K562 (cell line): ENCODE measurements at regions of chr2 and their contacts with region 1.

Region 1: GRCh38 chr2:172931918-172932520 is 143.6 kb upstream of the MAP3K20 start:
- DNase-seq: peak; percentile 40 to 79 (median 44)
- ATAC-seq: peak; percentile 88
- H3K4me3 ChIP-seq: no peak overlapping the region
- H3K27ac ChIP-seq: no peak overlapping the region
- H3K4me1 ChIP-seq: peaks cover 0 to 8% of the 10 kb centered on the region in 2 experiments; a peak in 3 of 5 replicates
- H3K27me3 ChIP-seq: peaks cover 0 to 3% of the 10 kb centered on the region in 2 experiments; a peak in 1 of 5 replicates
- CTCF ChIP-seq: peak; percentile 68 to 86 (median 72); a peak in 5 of 6 replicates
- EP300 ChIP-seq: no peak
- POLR2A ChIP-seq: no peak
- RAD21 ChIP-seq: peak in 1 of 2 experiments; percentile 76; a peak in 3 of 4 replicates

Region 2: GRCh38 chr2:172710584-172711024 is 221.4 kb before region 1 on chr2:
- CTCF ChIA-PET with region 1: no interaction called
- POLR2A ChIA-PET with region 1: no interaction called
- in situ Hi-C with region 1: no loop called
- intact Hi-C with region 1: loop called (anchors 5 kb)
- DNase-seq: peak in 3 of 4 experiments; percentile 14 to 37 (median 34)
- ATAC-seq: peak; percentile 67; the same call in 2 of the 3 replicates
- H3K4me3 ChIP-seq: no peak overlapping the region
- H3K27ac ChIP-seq: no peak overlapping the region
- H3K4me1 ChIP-seq: peaks cover 0 to 3% of the 10 kb centered on the region in 2 experiments; a peak in 1 of 5 replicates
- H3K27me3 ChIP-seq: peaks cover 0 to 26% of the 10 kb centered on the region in 2 experiments; a peak in 2 of 5 replicates
- CTCF ChIP-seq: peak; percentile 56 to 74 (median 62)
- EP300 ChIP-seq: no peak
- POLR2A ChIP-seq: no peak
- RAD21 ChIP-seq: peak; percentile 48 to 69

Region 3: GRCh38 chr2:172806493-172806892 is 125.5 kb before region 1 on chr2:
- CTCF ChIA-PET with region 1: interaction called, 15 read pairs
- POLR2A ChIA-PET with region 1: no interaction called
- in situ Hi-C with region 1: loop called (anchors 5 kb)
- intact Hi-C with region 1: loop called (anchors 2 kb)
- DNase-seq: peak; percentile 17 to 38 (median 26)
- ATAC-seq: peak; percentile 51
- H3K4me3 ChIP-seq: no peak overlapping the region
- H3K27ac ChIP-seq: no peak overlapping the region
- H3K4me1 ChIP-seq: no peaks in the 10 kb centered on the region
- H3K27me3 ChIP-seq: no peaks in the 10 kb centered on the region
- CTCF ChIP-seq: peak; percentile 66 to 88 (median 80)
- EP300 ChIP-seq: no peak
- POLR2A ChIP-seq: no peak
- RAD21 ChIP-seq: peak; percentile 82 to 92

Region 4: GRCh38 chr2:172813314-172813888 is 118.6 kb before region 1 on chr2:
- CTCF ChIA-PET with region 1: interaction called, 11 read pairs
- POLR2A ChIA-PET with region 1: interaction called, 4 read pairs
- in situ Hi-C with region 1: loop called (anchors 5 kb)
- intact Hi-C with region 1: no loop called
- DNase-seq: peak in 1 of 4 experiments; percentile 6
- ATAC-seq: peak; percentile 51; the same call in 1 of the 3 replicates
- H3K4me3 ChIP-seq: no peak overlapping the region
- H3K27ac ChIP-seq: no peak overlapping the region
- H3K4me1 ChIP-seq: no peaks in the 10 kb centered on the region
- H3K27me3 ChIP-seq: 0 out of 5 replicates have a peak, but pooled peaks cover 0 to 3% of the 10 kb centered on the region in 2 experiments
- CTCF ChIP-seq: peak in 2 of 3 experiments; percentile 26 to 47; a peak in 2 of 6 replicates
- EP300 ChIP-seq: no peak
- POLR2A ChIP-seq: no peak
- RAD21 ChIP-seq: peak in 1 of 2 experiments; percentile 40; a peak in 1 of 4 replicates

Region 5: GRCh38 chr2:172864182-172864581 is 67.8 kb before region 1 on chr2:
- CTCF ChIA-PET with region 1: interaction called, 19 read pairs
- POLR2A ChIA-PET with region 1: no interaction called
- in situ Hi-C with region 1: no loop called
- intact Hi-C with region 1: loop called (anchors 1 kb)
- DNase-seq: peak; percentile 42 to 66 (median 56)
- ATAC-seq: peak; percentile 95
- H3K4me3 ChIP-seq: no peak overlapping the region
- H3K27ac ChIP-seq: no peak overlapping the region
- H3K4me1 ChIP-seq: no peaks in the 10 kb centered on the region
- H3K27me3 ChIP-seq: no peaks in the 10 kb centered on the region; a peak in 2 of 5 replicates
- CTCF ChIP-seq: peak; percentile 76 to 87 (median 86)
- EP300 ChIP-seq: no peak
- POLR2A ChIP-seq: no peak
- RAD21 ChIP-seq: peak; percentile 78 to 92

Region 6: GRCh38 chr2:172888714-172889669 is 43.0 kb before region 1 on chr2:
- CTCF ChIA-PET with region 1: no interaction called
- POLR2A ChIA-PET with region 1: no interaction called
- in situ Hi-C with region 1: no loop called
- intact Hi-C with region 1: loop called (anchors 1 kb)
- DNase-seq: no peak
- ATAC-seq: no peak
- H3K4me3 ChIP-seq: no peak overlapping the region
- H3K27ac ChIP-seq: no peak overlapping the region
- H3K4me1 ChIP-seq: no peaks in the 10 kb centered on the region
- H3K27me3 ChIP-seq: peaks cover 6 to 9% of the 10 kb centered on the region in 2 experiments; a peak in 4 of 5 replicates
- CTCF ChIP-seq: no peak
- EP300 ChIP-seq: no peak
- POLR2A ChIP-seq: no peak
- RAD21 ChIP-seq: no peak

Region 7: GRCh38 chr2:173523497-173523896 is 591.5 kb after region 1 on chr2:
- CTCF ChIA-PET with region 1: no interaction called
- POLR2A ChIA-PET with region 1: no interaction called
- in situ Hi-C with region 1: no loop called
- intact Hi-C with region 1: no loop called
- DNase-seq: no peak
- ATAC-seq: no peak
- H3K4me3 ChIP-seq: no peak overlapping the region
- H3K27ac ChIP-seq: no peak overlapping the region
- H3K4me1 ChIP-seq: no peaks in the 10 kb centered on the region
- H3K27me3 ChIP-seq: peaks cover 4 to 6% of the 10 kb centered on the region in 2 experiments; a peak in 3 of 5 replicates
- CTCF ChIP-seq: no peak
- EP300 ChIP-seq: no peak
- POLR2A ChIP-seq: no peak
- RAD21 ChIP-seq: no peak